A549 (cell line): ENCODE measurements at regions of chr20 and their contacts with region 1.

Region 1: GRCh38 chr20:31951530-31952453 is at the start of gene PDRG1:
- DNase-seq: peak; percentile 72 to 96
- ATAC-seq: peak; percentile 89 to 99
- H3K4me3 ChIP-seq: peak within 1 kb of the TSS; percentile 100
- H3K27ac ChIP-seq: peak within 1 kb of the TSS; percentile 92 to 97
- H3K4me1 ChIP-seq: peaks cover 8% of the 10 kb centered on the region; the same call in 2 of the 3 replicates
- CTCF ChIP-seq: peak; percentile 96
- EP300 ChIP-seq: no peak
- POLR2A ChIP-seq: peak; percentile 85
- RAD21 ChIP-seq: peak; percentile 77 to 89
- polyA plus RNA-seq, gene PDRG1: 15.3 and 20.7 TPM in 2 replicates

Region 2: DNA sequence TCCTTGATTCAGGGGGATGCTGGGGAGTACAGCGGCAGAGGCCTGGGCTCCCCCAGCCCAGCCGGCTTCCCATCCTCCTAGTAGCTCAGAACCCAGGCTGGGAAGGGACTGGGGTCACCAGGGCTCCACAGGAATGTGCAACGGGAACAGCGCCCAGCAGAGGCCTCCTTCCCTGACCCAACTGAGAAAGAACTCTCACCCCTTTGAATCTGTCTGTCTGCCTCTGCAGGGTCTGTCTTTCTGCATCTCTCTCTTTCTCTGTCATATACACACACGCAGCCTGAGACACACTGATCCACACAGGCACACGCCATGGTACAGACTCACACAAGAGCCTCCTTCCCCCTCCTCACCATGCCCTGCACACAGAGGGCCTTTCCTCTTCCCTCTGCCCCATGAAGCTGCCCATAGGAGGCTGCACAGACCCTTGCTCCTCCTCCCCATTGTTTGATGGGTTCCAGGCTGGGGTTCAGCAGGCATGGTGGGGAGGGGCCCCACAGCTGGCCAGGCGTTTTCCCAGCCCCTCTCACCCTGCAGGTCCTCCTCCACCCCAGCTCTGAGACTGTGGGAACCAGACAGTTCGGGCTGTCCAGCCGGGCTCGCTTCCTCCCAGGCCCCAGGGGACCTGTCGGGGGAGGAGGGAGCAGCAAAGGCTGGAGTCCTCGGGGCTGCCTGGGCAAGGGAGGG is 109.2 kb before region 1 on chr20:
- CTCF ChIA-PET with region 1: interaction called, 24 read pairs
- POLR2A ChIA-PET with region 1: no interaction called
- DNase-seq: peak in 1 of 2 experiments; percentile 45
- ATAC-seq: peak; percentile 22 to 44; a peak in 4 of 6 replicates
- H3K4me3 ChIP-seq: no peak overlapping the region
- H3K27ac ChIP-seq: peak overlapping the region; percentile 85 to 86
- H3K4me1 ChIP-seq: peaks cover 84% of the 10 kb centered on the region
- CTCF ChIP-seq: no peak
- EP300 ChIP-seq: no peak
- POLR2A ChIP-seq: no peak
- RAD21 ChIP-seq: no peak

Region 3: DNA sequence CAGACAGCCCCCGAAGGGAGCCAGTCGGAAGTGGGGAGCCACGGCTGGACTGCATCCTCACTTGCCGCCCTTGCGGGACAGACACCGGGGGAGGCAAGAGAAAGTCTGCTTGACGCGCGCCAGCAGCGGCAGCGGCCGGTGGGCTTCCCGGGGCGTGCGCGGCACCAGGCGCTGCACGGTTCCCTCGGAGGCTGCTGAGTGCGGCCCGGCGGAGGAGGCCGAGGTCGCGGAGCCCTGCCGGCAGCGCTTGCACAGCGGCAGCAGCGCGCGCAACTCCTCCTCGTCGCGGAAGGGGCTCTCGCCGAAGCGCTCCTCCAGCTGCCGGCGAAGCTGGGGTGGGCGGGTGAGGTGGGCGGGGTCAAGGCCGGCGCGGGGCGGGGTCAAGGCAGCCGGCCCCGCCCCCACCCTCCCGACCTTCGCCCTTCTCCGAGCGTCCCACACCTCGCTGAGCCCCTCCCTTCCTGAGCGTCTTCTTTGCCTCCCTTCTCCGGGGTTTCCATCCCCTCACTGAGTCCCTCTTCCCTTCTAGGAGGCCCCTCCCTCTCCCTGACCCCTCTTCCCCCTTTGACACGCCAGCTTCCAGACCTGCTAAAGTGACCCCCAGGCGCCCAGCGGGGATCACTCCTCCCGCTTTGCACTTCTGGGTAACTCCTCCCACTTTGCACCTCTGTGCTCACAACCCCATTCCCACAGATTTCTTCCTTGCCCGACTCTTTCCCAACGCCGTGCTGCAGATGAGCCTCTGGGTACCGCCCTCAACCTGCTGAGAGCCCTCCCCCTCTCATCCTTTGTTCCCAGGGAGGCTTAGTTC is 90.2 kb before region 1 on chr20:
- CTCF ChIA-PET with region 1: interaction called, 173 read pairs
- POLR2A ChIA-PET with region 1: no interaction called
- DNase-seq: peak; percentile 75 to 85
- ATAC-seq: peak; percentile 72 to 88
- H3K4me3 ChIP-seq: peak overlapping the region; percentile 57
- H3K27ac ChIP-seq: peak overlapping the region; percentile 28 to 82; a peak in 5 of 6 replicates
- H3K4me1 ChIP-seq: peaks cover 15% of the 10 kb centered on the region
- CTCF ChIP-seq: no peak
- EP300 ChIP-seq: no peak
- POLR2A ChIP-seq: peak; percentile 50
- RAD21 ChIP-seq: no peak

Region 4: DNA sequence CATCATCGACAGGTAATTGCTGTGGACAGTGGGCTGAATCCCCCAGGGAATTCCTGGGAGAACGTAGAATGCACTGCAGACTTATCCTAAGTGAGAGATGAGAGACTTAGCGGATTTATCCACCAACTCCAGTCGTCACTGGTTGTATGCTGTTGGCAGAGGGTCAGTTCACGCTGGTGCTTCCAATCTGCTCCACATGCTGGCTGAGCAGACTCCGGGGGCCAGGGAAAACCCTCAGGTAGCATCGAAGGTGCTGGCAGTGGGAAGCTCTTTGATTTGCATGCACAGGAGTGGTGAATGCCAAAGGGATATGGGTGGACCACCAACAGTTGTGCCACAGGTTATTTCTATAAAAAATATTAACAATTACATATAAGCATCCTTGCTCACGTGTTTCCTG is 61.1 kb before region 1 on chr20:
- CTCF ChIA-PET with region 1: no interaction called
- POLR2A ChIA-PET with region 1: no interaction called
- DNase-seq: no peak
- ATAC-seq: no peak
- H3K4me3 ChIP-seq: no peak overlapping the region
- H3K27ac ChIP-seq: no peak overlapping the region
- H3K4me1 ChIP-seq: no peaks in the 10 kb centered on the region
- CTCF ChIP-seq: no peak
- EP300 ChIP-seq: no peak
- POLR2A ChIP-seq: no peak
- RAD21 ChIP-seq: no peak

Region 5: GRCh38 chr20:31936420-31936819 is 15.4 kb before region 1 on chr20:
- CTCF ChIA-PET with region 1: interaction called, 26 read pairs
- POLR2A ChIA-PET with region 1: no interaction called
- DNase-seq: no peak
- ATAC-seq: no peak
- H3K4me3 ChIP-seq: no peak overlapping the region
- H3K27ac ChIP-seq: no peak overlapping the region
- H3K4me1 ChIP-seq: no peaks in the 10 kb centered on the region
- CTCF ChIP-seq: no peak
- EP300 ChIP-seq: no peak
- POLR2A ChIP-seq: no peak
- RAD21 ChIP-seq: no peak

Region 6: DNA sequence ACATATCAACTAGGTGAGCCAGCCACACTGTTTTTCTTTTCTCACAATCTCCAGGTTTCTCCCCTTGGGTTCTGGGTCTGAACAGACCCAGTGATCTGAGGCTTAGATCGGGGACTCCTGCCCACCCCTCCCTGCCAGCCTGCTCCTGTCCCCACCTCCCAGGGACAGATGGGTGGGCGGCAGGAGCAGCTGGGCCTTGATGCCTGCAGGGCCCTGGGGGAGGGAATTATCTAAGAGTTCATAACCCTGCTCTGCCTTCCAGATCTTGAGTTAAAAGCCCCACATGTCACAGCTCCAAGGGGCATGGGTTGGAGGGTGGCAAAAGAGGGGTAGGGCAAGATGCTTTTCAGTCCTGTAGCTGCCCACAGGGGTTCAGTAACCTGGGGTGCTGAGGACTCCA is 11.0 kb after region 1 on chr20:
- CTCF ChIA-PET with region 1: interaction called, 35 read pairs
- POLR2A ChIA-PET with region 1: interaction called, 3 read pairs
- DNase-seq: no peak
- ATAC-seq: no peak
- H3K4me3 ChIP-seq: no peak overlapping the region
- H3K27ac ChIP-seq: no peak overlapping the region
- H3K4me1 ChIP-seq: peaks cover under 1% of the 10 kb centered on the region; the same call in 1 of the 3 replicates
- CTCF ChIP-seq: no peak
- EP300 ChIP-seq: no peak
- POLR2A ChIP-seq: no peak
- RAD21 ChIP-seq: no peak

Region 7: GRCh38 chr20:31968291-31969126 is 16.7 kb after region 1 on chr20:
- CTCF ChIA-PET with region 1: interaction called, 35 read pairs
- POLR2A ChIA-PET with region 1: interaction called, 3 read pairs
- DNase-seq: peak; percentile 44 to 81
- ATAC-seq: peak; percentile 82 to 89
- H3K4me3 ChIP-seq: no peak overlapping the region; the same call in 2 of the 3 replicates
- H3K27ac ChIP-seq: no peak overlapping the region
- H3K4me1 ChIP-seq: peaks cover 6% of the 10 kb centered on the region; the same call in 2 of the 3 replicates
- CTCF ChIP-seq: no peak
- EP300 ChIP-seq: no peak
- POLR2A ChIP-seq: no peak
- RAD21 ChIP-seq: no peak